ENCODE measurements at regions of chr6 and their contacts with region 1.

Region 1: DNA sequence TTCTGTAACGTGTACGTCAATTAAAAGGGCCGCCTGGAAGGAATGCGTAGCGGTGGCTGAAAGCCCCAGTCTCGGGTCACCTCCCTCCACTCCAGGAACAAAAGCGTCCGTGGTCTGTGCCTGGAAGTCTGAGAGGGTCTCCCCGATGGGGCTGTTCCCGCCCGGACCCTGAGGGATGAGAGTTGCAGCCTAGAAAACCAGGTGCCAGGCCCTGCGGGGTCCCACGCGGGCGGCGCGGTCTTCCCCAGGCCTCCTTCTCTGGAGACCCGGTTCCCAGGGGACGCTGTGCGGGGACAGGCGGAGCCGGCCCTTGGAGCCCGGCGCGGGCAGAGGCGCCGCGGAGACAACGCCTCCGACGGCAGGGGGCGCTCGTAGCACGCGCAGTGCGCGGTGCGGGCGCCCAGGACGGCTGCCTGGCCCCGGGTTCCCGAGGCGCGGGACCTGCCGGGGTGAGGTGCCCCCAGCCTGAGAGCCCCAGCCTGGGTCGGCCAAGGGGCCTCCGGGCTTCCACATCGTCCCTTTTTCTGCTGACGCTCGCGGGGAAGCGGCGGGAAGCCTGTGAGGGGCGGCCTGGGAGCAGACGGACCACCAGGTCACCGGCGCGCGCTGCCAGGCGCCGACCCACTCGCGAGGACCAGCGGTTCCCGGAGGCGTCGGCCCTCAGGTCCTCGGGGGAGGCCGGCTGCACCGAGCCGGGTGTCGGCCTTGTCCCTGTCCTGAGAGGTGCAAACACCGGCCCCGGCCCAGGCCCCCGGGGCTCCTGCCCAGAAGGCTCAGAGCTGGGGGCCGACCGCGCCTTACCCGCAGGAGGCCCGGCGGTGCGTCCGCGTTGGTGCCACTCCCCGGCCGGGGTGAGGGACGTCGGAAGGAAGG is 5.3 kb upstream of the FOXC1 start:
- DNase-seq: peak; percentile 81 to 92 (median 88)
- H3K4me3 ChIP-seq: peak overlapping the region in 1 of 3 donors; percentile 49
- H3K27ac ChIP-seq: peak overlapping the region in 1 of 2 donors; percentile 32
- H3K4me1 ChIP-seq: peaks cover 0 to 17% (median 0%) of the 10 kb centered on the region in 3 donors
- H3K27me3 ChIP-seq: peaks cover 31% of the 10 kb centered on the region
- CTCF ChIP-seq: peak; percentile 94

Region 2: GRCh38 chr6:1940381-1940780 is 336.0 kb after region 1 on chr6:
- intact Hi-C with region 1: no loop called
- DNase-seq: peak in 4 of 5 donors; percentile 52 to 84 (median 72)
- H3K4me3 ChIP-seq: no peak overlapping the region
- H3K27ac ChIP-seq: no peak overlapping the region
- H3K4me1 ChIP-seq: no peaks in the 10 kb centered on the region
- H3K27me3 ChIP-seq: no peaks in the 10 kb centered on the region
- CTCF ChIP-seq: no peak

Region 3: GRCh38 chr6:1987640-1988039 is 383.2 kb after region 1 on chr6:
- intact Hi-C with region 1: no loop called
- DNase-seq: no peak
- H3K4me3 ChIP-seq: no peak overlapping the region
- H3K27ac ChIP-seq: no peak overlapping the region
- H3K4me1 ChIP-seq: no peaks in the 10 kb centered on the region
- H3K27me3 ChIP-seq: no peaks in the 10 kb centered on the region
- CTCF ChIP-seq: no peak

Region 4: DNA sequence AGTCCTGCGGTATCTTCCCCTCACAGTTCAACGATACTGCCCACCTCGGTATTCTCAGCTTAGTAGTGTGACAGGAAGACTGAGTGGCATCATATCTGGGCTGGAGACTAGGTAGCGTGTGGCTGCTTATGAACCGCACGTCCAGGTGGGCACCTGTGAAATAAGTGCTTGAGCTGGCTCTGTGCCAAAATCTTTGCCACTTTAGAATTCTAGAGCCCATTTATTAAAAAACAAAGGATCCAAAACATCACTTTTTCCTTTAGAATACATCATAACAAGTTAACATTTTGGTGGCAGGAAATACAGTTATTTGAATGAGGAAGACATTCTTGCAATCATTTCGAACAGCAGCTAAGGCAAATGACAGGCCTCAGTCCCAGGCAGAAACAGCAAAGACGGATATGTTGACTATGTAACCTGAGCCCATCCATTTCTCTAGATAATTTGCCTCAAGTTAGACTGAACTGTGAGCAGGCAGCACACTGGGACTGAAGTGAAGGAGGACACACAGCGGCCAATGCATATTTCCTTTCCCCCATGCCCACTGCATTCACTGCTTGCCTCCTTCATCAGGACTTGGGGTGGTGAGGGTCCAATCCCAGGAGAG is 504.4 kb after region 1 on chr6:
- intact Hi-C with region 1: loop called (anchors 5 kb)
- DNase-seq: peak in 3 of 5 donors; percentile 37 to 73 (median 70)
- H3K4me3 ChIP-seq: no peak overlapping the region
- H3K27ac ChIP-seq: no peak overlapping the region
- H3K4me1 ChIP-seq: no peaks in the 10 kb centered on the region
- H3K27me3 ChIP-seq: no peaks in the 10 kb centered on the region
- CTCF ChIP-seq: no peak

Measured in kidney (tissue), 22 donors.